Sigmoid colon (tissue), 7 donors: ENCODE measurements at regions of chr5 and their contacts with region 1.

Region 1: DNA sequence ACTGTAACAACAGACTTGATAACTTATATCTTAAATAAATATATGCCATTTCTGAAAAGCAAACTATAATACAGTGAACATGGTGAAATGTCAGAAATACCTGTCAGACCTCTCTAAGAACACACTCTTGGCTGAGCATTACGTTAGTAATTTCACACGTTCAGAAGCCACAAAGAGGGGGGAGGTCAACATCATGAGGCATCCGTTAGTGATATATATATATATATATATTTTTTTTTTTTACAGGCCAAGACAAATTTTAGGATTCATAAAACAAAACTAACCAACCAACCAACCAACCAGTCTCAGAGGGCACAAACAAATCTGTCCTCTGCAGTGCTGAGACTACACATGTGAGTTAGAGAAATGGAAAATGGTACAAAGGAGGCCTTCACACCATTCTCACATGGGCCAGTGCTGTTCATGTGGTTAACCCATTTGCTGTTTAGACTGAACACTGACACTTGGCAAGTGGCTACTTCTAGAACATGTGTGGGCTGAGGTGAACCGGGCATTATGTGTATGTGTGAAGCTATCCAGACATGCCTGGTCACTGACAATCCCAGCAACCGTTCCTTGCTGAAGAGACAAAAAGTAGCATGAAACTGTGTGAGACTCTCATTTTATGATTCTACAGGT is 54.5 kb downstream of the ELL2 start:
- DNase-seq: no peak
- H3K4me3 ChIP-seq: no peak overlapping the region
- H3K27ac ChIP-seq: no peak overlapping the region
- H3K4me1 ChIP-seq: no peaks in the 10 kb centered on the region
- H3K27me3 ChIP-seq: no peaks in the 10 kb centered on the region
- CTCF ChIP-seq: no peak
- EP300 ChIP-seq: no peak
- POLR2A ChIP-seq: no peak

Region 2: DNA sequence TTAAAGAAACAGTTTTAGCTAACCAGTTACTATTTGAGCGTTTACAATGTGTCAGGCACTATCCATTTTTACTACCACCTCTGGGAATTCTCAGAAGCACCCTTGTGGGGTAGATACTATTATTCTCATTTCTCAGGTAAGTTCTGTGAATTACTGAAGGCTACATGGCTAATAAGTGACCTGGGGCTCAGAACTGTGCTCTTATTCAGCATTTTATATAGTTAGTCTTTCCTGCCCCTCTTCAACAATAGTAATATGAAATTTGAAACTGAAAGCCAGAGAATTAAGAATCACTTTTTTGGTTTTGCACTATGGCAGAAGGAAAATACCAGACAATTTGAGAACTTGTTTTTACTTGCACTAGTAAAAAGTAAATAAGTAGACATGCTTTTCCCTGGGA is 42.6 kb after region 1 on chr5:
- intact Hi-C with region 1: loop called (anchors 5 kb)
- DNase-seq: no peak
- H3K4me3 ChIP-seq: no peak overlapping the region
- H3K27ac ChIP-seq: no peak overlapping the region
- H3K4me1 ChIP-seq: peaks cover 0 to 22% (median 16%) of the 10 kb centered on the region in 4 donors
- H3K27me3 ChIP-seq: no peaks in the 10 kb centered on the region
- CTCF ChIP-seq: no peak
- EP300 ChIP-seq: no peak
- POLR2A ChIP-seq: no peak